Right lobe of liver (tissue), 6 donors: ENCODE measurements at regions of chr1 and their contacts with region 1.

Region 1: DNA sequence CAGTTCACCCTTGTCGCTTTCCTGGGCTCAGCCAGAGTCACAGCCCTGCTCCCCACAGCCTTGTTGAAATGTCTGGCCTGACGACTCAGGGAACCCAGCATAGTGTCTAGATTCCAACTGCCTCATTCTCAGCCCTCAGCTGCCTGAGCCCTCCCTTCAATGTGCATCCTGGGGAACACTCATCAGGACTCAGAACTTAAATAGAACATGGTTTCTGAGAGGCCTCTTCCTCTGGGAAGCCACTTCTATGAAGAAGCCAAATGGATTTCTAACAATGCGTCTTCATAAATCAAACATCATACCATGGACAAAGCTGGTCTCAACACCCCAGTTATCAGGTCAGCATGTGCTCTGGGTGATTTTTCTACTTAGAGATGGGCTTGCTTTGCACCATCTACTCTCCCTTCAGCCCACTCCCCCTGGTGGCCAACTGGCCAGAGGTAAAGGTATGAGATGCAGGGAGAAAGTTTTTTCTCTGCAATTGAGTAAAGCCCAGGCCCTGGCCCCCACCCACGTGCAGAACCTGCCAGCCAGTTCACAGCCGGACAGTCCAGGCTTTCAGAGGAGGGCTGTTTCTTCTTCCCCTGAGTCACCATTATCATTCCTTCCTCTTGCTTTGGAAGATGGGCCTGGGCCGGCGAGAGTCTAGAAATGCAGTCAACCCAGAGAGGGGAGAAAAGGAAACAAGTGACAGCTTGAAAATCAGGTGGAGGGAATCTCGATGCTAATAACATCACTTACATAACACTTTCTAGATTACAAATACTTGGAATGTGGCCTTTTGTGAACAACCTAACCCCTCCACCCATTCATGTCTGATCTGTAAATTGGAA is 32.1 kb downstream of the CD244 start:
- DNase-seq: peak; percentile 70 to 85 (median 73)
- ATAC-seq: peak; percentile 70 to 85 (median 72)
- H3K4me3 ChIP-seq: no peak overlapping the region
- H3K27ac ChIP-seq: no peak overlapping the region
- H3K4me1 ChIP-seq: no peaks in the 10 kb centered on the region
- H3K27me3 ChIP-seq: no peaks in the 10 kb centered on the region
- CTCF ChIP-seq: peak; percentile 58 to 64 (median 62)
- POLR2A ChIP-seq: no peak

Region 2: GRCh38 chr1:160664573-160665051 is 165.9 kb before region 1 on chr1:
- intact Hi-C with region 1: no loop called
- DNase-seq: no peak
- ATAC-seq: peak in 1 of 4 donors; percentile 26
- H3K4me3 ChIP-seq: no peak overlapping the region
- H3K27ac ChIP-seq: no peak overlapping the region
- H3K4me1 ChIP-seq: no peaks in the 10 kb centered on the region
- H3K27me3 ChIP-seq: no peaks in the 10 kb centered on the region
- CTCF ChIP-seq: no peak
- POLR2A ChIP-seq: no peak

Region 3: GRCh38 chr1:160726498-160727315 is 103.8 kb before region 1 on chr1:
- intact Hi-C with region 1: loop called in 1 of 2 experiments (anchors 5 kb)
- DNase-seq: peak in 2 of 3 donors; percentile 35 to 67
- ATAC-seq: peak; percentile 92 to 98 (median 98)
- H3K4me3 ChIP-seq: no peak overlapping the region
- H3K27ac ChIP-seq: no peak overlapping the region
- H3K4me1 ChIP-seq: no peaks in the 10 kb centered on the region
- H3K27me3 ChIP-seq: no peaks in the 10 kb centered on the region
- CTCF ChIP-seq: peak; percentile 81 to 91 (median 86)
- POLR2A ChIP-seq: no peak

Region 4: GRCh38 chr1:160942926-160943325 is 112.4 kb after region 1 on chr1:
- intact Hi-C with region 1: loop called in 1 of 2 experiments (anchors 10 kb)
- DNase-seq: no peak
- ATAC-seq: peak; percentile 61 to 87 (median 70)
- H3K4me3 ChIP-seq: no peak overlapping the region
- H3K27ac ChIP-seq: no peak overlapping the region
- H3K4me1 ChIP-seq: no peaks in the 10 kb centered on the region
- H3K27me3 ChIP-seq: no peaks in the 10 kb centered on the region
- CTCF ChIP-seq: peak in 3 of 4 donors; percentile 12 to 31 (median 31)
- POLR2A ChIP-seq: no peak

Region 5: DNA sequence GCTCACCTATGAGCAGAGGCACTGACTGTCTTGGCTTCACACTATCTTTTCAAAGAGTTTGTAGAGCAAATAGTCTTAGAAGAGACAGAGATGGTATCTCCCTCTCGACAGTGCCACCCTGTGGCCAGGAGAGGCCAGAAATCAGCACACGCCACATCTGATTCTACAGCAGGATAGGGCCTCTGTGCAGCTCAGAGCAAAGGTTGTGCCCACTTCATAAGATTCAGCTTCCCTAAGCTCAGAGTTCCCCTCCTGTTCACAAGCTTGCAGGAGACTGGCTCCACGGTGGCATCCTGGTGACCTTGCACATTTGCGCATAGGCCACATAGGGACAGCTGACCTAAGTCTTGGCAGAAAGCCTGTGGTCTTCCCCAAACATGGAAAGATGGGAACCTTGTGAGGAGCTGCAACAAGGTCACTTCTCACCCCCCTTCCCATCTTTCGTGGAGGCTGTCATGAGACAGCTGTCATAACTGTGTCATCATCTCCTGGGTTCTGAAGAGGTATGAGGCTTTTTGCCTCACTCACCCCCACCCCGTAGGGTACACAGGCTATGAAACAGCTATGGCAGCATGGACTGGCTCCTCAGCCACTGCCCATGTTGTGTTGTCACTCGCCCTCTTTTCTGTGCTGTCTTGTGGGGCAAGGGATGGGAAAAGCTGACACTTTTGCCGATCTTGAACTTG is 121.0 kb after region 1 on chr1:
- intact Hi-C with region 1: loop called (anchors 10 kb)
- DNase-seq: peak; percentile 66 to 70 (median 67)
- ATAC-seq: peak; percentile 89 to 92 (median 91)
- H3K4me3 ChIP-seq: no peak overlapping the region
- H3K27ac ChIP-seq: no peak overlapping the region
- H3K4me1 ChIP-seq: peaks cover 0 to 6% (median 0%) of the 10 kb centered on the region in 4 donors
- H3K27me3 ChIP-seq: no peaks in the 10 kb centered on the region
- CTCF ChIP-seq: peak; percentile 71 to 77 (median 76)
- POLR2A ChIP-seq: no peak

Region 6: GRCh38 chr1:161071886-161072371 is 241.4 kb after region 1 on chr1:
- intact Hi-C with region 1: loop called in 1 of 2 experiments (anchors 10 kb)
- DNase-seq: peak in 1 of 3 donors; percentile 65
- ATAC-seq: peak; percentile 32 to 65 (median 46)
- H3K4me3 ChIP-seq: no peak overlapping the region
- H3K27ac ChIP-seq: no peak overlapping the region
- H3K4me1 ChIP-seq: no peaks in the 10 kb centered on the region
- H3K27me3 ChIP-seq: no peaks in the 10 kb centered on the region
- CTCF ChIP-seq: peak; percentile 47 to 55 (median 47)
- POLR2A ChIP-seq: no peak